HCT116 (cell line): ENCODE measurements at regions of chrX and their contacts with region 1.

Region 1: GRCh38 chrX:46686003-46686645 is 72.8 kb downstream of the SLC9A7 start:
- DNase-seq: peak; percentile 12
- ATAC-seq: peak; percentile 67
- H3K4me3 ChIP-seq: no peak overlapping the region
- H3K27ac ChIP-seq: no peak overlapping the region
- H3K4me1 ChIP-seq: no peaks in the 10 kb centered on the region
- H3K27me3 ChIP-seq: no peaks in the 10 kb centered on the region
- CTCF ChIP-seq: peak; percentile 24 to 60 (median 52); a peak in 5 of 6 replicates
- POLR2A ChIP-seq: no peak
- RAD21 ChIP-seq: peak; percentile 54

Region 2: GRCh38 chrX:46554942-46555341 is 131.2 kb before region 1 on chrX:
- CTCF ChIA-PET with region 1: no interaction called
- POLR2A ChIA-PET with region 1: no interaction called
- RAD21 ChIA-PET with region 1: no interaction called
- intact Hi-C with region 1: loop called (anchors 2 kb)
- DNase-seq: no peak
- ATAC-seq: no peak
- H3K4me3 ChIP-seq: no peak overlapping the region
- H3K27ac ChIP-seq: no peak overlapping the region
- H3K4me1 ChIP-seq: peaks cover 3 to 17% of the 10 kb centered on the region in 2 experiments; a peak in 2 of 4 replicates
- H3K27me3 ChIP-seq: no peaks in the 10 kb centered on the region
- CTCF ChIP-seq: peak in 2 of 3 experiments; percentile 23 to 29; a peak in 3 of 6 replicates
- POLR2A ChIP-seq: no peak
- RAD21 ChIP-seq: peak; percentile 54

Region 3: GRCh38 chrX:46722742-46723568 is 36.8 kb after region 1 on chrX:
- CTCF ChIA-PET with region 1: no interaction called
- POLR2A ChIA-PET with region 1: no interaction called
- RAD21 ChIA-PET with region 1: no interaction called
- intact Hi-C with region 1: no loop called
- DNase-seq: no peak
- ATAC-seq: no peak
- H3K4me3 ChIP-seq: no peak overlapping the region
- H3K27ac ChIP-seq: no peak overlapping the region
- H3K4me1 ChIP-seq: peaks cover 2 to 9% of the 10 kb centered on the region in 2 experiments; a peak in 2 of 4 replicates
- H3K27me3 ChIP-seq: no peaks in the 10 kb centered on the region
- CTCF ChIP-seq: no peak
- POLR2A ChIP-seq: no peak
- RAD21 ChIP-seq: no peak